ENCODE measurements at regions of chr14 and their contacts with region 1.

Region 1: DNA sequence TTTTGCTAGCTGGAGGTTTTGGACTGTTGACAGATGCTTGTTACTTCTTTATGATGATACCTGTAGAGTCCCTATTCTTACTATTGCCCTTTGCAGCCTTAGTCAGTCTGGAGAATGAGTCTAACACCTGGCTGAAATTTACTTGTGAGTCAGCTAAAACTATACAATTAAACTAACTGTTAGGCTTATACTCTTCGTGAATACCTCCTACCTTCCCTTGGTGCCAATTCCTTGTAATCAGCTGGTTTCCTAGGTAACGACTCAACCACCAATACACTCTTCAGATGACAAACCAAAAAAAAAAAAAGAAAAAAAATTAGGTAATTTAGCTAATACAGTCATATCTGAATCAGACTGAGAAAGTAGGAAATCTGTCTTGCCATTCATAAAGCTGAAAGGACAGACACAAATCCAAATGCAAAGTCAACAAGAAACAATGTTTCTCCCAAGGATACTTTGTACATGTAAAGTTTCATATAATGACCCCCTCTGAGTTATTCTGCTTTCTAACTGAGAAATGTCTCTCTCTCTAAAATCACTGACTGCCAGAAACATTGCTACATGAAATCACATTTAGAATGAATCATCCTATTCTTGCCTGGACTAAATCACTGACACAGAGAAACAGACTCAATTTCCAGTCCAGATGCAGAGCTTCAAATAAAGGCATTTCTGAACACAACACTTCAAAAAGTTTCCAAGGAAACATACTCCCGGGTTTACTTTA is 56.5 kb upstream of the CDKL1 start:
- DNase-seq: peak; percentile 86
- ATAC-seq: peak; percentile 81
- H3K4me3 ChIP-seq: no peak overlapping the region
- H3K27ac ChIP-seq: no peak overlapping the region
- H3K4me1 ChIP-seq: peaks cover 5% of the 10 kb centered on the region
- H3K27me3 ChIP-seq: no peaks in the 10 kb centered on the region
- CTCF ChIP-seq: no peak
- POLR2A ChIP-seq: no peak
- RAD21 ChIP-seq: no peak

Region 2: GRCh38 chr14:50231475-50232275 is 221.5 kb before region 1 on chr14 and contains the start of gene SOS2:
- CTCF ChIA-PET with region 1: no interaction called
- POLR2A ChIA-PET with region 1: no interaction called
- dilution Hi-C with region 1: no loop called
- in situ Hi-C with region 1: no loop called
- intact Hi-C with region 1: no loop called
- DNase-seq: peak; percentile 71
- ATAC-seq: peak; percentile 94
- H3K4me3 ChIP-seq: peak within 1 kb of the TSS; percentile 88
- H3K27ac ChIP-seq: peak within 1 kb of the TSS; percentile 92
- H3K4me1 ChIP-seq: peaks cover 1% of the 10 kb centered on the region; the same call in 1 of the 2 replicates
- H3K27me3 ChIP-seq: no peaks in the 10 kb centered on the region
- CTCF ChIP-seq: no peak; the same call in 1 of the 2 replicates
- POLR2A ChIP-seq: peak; percentile 86
- RAD21 ChIP-seq: no peak
- total RNA-seq, gene SOS2: 10.9 and 13.1 TPM in 2 replicates

Region 3: GRCh38 chr14:50335389-50335788 is 117.8 kb before region 1 on chr14:
- CTCF ChIA-PET with region 1: no interaction called
- POLR2A ChIA-PET with region 1: no interaction called
- dilution Hi-C with region 1: no loop called
- in situ Hi-C with region 1: no loop called
- intact Hi-C with region 1: no loop called
- DNase-seq: peak; percentile 72
- ATAC-seq: peak; percentile 58
- H3K4me3 ChIP-seq: no peak overlapping the region
- H3K27ac ChIP-seq: peak overlapping the region; percentile 79
- H3K4me1 ChIP-seq: peaks cover 14% of the 10 kb centered on the region
- H3K27me3 ChIP-seq: no peaks in the 10 kb centered on the region
- CTCF ChIP-seq: no peak
- POLR2A ChIP-seq: no peak
- RAD21 ChIP-seq: no peak

Region 4: GRCh38 chr14:50520947-50521815 is 68.0 kb after region 1 on chr14:
- CTCF ChIA-PET with region 1: no interaction called
- POLR2A ChIA-PET with region 1: no interaction called
- dilution Hi-C with region 1: no loop called
- in situ Hi-C with region 1: no loop called
- intact Hi-C with region 1: loop called (anchors 10 kb)
- DNase-seq: peak; percentile 95
- ATAC-seq: peak; percentile 73
- H3K4me3 ChIP-seq: no peak overlapping the region
- H3K27ac ChIP-seq: no peak overlapping the region
- H3K4me1 ChIP-seq: peaks cover 12% of the 10 kb centered on the region; the same call in 1 of the 2 replicates
- H3K27me3 ChIP-seq: no peaks in the 10 kb centered on the region
- CTCF ChIP-seq: no peak
- POLR2A ChIP-seq: no peak
- RAD21 ChIP-seq: no peak

Measured in IMR-90 (cell line).